Activated CD4-positive, alpha-beta T cell treated with anti-CD3 and anti-CD28 coated beads for 36 hours (primary cell): ENCODE measurements at regions of chr5 and their contacts with region 1.

Region 1: DNA sequence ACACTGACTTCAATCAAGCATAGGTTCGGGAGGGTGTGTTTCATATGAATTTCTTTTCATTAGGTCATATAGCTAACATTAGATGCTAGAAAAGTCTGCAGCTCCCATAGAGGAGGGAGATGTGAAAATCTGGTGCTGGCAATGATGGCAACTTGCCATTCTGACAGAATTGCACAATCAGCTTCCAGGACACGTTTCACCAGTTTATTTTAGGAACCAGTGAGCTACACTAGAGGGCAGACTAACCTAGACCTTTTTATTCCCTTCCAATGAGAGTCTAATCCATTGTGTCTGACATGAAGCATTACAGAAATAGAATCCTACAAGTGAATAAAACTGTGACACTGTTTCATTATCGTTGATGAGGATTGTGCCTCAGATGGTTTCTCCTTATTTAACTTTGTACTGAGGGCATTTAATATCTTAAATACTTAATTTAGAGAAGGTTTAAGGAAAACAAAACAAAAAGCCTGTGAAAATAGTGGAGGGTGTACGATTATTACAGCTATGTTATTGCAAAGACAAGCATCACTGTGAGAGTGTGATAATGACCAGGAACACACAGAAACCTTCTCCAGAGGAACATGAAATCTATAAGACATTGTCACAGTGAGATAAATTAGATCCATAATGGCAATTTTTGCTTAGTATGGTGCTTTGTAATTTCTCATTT is 363.3 kb upstream of the RPS23 start:
- DNase-seq: peak; percentile 29
- ATAC-seq: peak; percentile 74
- H3K4me3 Mint-ChIP-seq: no peak overlapping the region
- H3K27ac Mint-ChIP-seq: no peak overlapping the region
- H3K4me1 Mint-ChIP-seq: no peaks in the 10 kb centered on the region
- H3K27me3 Mint-ChIP-seq: no peaks in the 10 kb centered on the region

Region 2: DNA sequence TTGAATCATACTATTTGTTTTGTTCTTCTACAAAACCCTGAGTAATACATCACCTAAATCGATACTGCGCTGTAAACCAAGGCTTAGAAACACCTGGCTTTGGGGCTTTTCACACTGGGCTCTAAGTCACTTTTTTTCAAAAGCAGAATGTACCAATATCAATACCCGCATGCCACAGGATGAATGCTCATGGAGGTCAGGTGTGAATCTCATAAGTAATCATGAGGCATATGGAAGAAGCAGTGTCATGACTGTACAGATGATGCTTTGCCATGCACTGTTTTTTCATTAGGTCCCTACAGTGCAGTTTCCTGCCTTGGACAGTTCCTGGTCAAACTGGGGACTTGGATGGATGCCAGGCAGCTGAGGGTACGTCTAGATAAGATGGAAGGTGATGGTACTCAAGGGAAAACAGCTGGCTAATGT is 718.6 kb before region 1 on chr5:
- CTCF ChIA-PET with region 1: no interaction called
- POLR2A ChIA-PET with region 1: no interaction called
- intact Hi-C with region 1: no loop called
- DNase-seq: peak; percentile 5
- ATAC-seq: peak; percentile 60
- H3K4me3 Mint-ChIP-seq: no peak overlapping the region
- H3K27ac Mint-ChIP-seq: no peak overlapping the region
- H3K4me1 Mint-ChIP-seq: no peaks in the 10 kb centered on the region
- H3K27me3 Mint-ChIP-seq: no peaks in the 10 kb centered on the region

Region 3: DNA sequence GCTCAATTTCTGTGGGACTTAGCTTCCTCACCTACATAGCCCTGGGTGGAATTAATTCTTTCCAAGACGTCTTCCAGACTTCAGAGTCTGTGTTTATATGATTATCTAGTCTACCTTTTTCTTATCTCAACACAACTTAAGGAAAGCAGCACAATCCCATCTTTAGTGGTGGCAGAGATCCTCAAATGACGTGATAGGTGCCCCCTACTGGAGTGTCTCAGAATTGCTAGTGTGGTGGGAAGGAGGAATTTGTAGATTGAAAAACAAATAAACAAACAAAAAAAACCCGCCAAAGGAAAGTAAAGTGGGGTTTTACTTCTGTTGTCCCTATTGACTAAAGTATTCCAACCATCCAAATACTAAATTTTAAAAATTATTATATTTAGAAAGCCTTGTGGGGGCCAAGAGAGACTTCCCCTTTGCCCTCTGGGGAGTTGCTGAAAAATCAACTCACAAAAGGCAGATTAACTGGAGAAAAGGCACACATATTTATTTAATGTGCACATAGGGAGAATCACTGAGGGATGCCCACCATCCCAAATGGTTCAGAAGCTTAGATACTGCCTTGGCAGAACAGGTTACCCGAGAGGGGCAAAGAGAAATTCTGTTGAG is 152.4 kb after region 1 on chr5:
- CTCF ChIA-PET with region 1: interaction called, 5 read pairs
- POLR2A ChIA-PET with region 1: no interaction called
- intact Hi-C with region 1: loop called (anchors 2 kb)
- DNase-seq: peak; percentile 62
- ATAC-seq: no peak
- H3K4me3 Mint-ChIP-seq: no peak overlapping the region
- H3K27ac Mint-ChIP-seq: no peak overlapping the region
- H3K4me1 Mint-ChIP-seq: no peaks in the 10 kb centered on the region
- H3K27me3 Mint-ChIP-seq: no peaks in the 10 kb centered on the region

Region 4: GRCh38 chr5:82873452-82873851 is 232.0 kb after region 1 on chr5:
- CTCF ChIA-PET with region 1: no interaction called
- POLR2A ChIA-PET with region 1: no interaction called
- intact Hi-C with region 1: no loop called
- DNase-seq: no peak
- ATAC-seq: no peak
- H3K4me3 Mint-ChIP-seq: no peak overlapping the region
- H3K27ac Mint-ChIP-seq: no peak overlapping the region
- H3K4me1 Mint-ChIP-seq: no peaks in the 10 kb centered on the region
- H3K27me3 Mint-ChIP-seq: no peaks in the 10 kb centered on the region

Region 5: GRCh38 chr5:83430130-83431010 is 788.9 kb after region 1 on chr5:
- CTCF ChIA-PET with region 1: interaction called, 3 read pairs
- POLR2A ChIA-PET with region 1: no interaction called
- intact Hi-C with region 1: loop called (anchors 1 kb)
- DNase-seq: peak; percentile 75
- ATAC-seq: peak; percentile 81
- H3K4me3 Mint-ChIP-seq: no peak overlapping the region
- H3K27ac Mint-ChIP-seq: no peak overlapping the region
- H3K4me1 Mint-ChIP-seq: no peaks in the 10 kb centered on the region
- H3K27me3 Mint-ChIP-seq: no peaks in the 10 kb centered on the region

Region 6: GRCh38 chr5:83473346-83474163 is 832.1 kb after region 1 on chr5:
- CTCF ChIA-PET with region 1: no interaction called
- POLR2A ChIA-PET with region 1: no interaction called
- intact Hi-C with region 1: loop called in 1 of 2 experiments (anchors 1 kb)
- DNase-seq: peak; percentile 79
- ATAC-seq: peak; percentile 69
- H3K4me3 Mint-ChIP-seq: peak overlapping the region; percentile 75
- H3K27ac Mint-ChIP-seq: no peak overlapping the region
- H3K4me1 Mint-ChIP-seq: peaks cover 38% of the 10 kb centered on the region
- H3K27me3 Mint-ChIP-seq: peaks cover 58% of the 10 kb centered on the region